ENCODE measurements at regions of chrX and their contacts with region 1.

Region 1: DNA sequence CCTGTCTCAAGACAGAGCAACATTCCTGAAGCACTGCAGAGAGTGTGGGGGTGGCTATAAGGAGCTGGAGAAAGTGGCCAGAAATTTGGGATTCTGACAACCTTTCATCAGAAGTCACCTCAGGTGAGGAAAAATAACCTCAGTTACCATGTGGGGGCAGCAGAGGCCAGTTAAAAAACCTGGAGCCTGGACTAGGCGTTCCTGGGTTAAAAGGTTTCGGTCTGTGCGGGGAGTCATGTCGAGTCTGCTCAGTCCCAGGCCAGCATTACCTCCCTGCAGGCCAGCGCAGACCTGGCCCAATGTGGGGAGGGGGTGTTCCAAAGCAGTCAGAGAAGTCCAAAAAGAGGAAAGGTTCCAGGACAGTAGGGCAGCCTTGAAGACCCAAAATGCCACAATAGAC is 10.9 kb upstream of the NALF2 start:
- DNase-seq: peak; percentile 18 to 44 (median 32)
- ATAC-seq: peak; percentile 83
- H3K4me3 ChIP-seq: no peak overlapping the region
- H3K27ac ChIP-seq: no peak overlapping the region
- H3K4me1 ChIP-seq: no peaks in the 10 kb centered on the region; a peak in 1 of 5 replicates
- H3K27me3 ChIP-seq: no peaks in the 10 kb centered on the region
- CTCF ChIP-seq: peak; percentile 38 to 59 (median 48); a peak in 5 of 6 replicates
- EP300 ChIP-seq: no peak
- POLR2A ChIP-seq: no peak
- RAD21 ChIP-seq: peak in 1 of 2 experiments; percentile 52; a peak in 3 of 4 replicates

Region 2: GRCh38 chrX:68832101-68832416 is 661.1 kb before region 1 on chrX:
- CTCF ChIA-PET with region 1: no interaction called
- POLR2A ChIA-PET with region 1: no interaction called
- in situ Hi-C with region 1: no loop called
- intact Hi-C with region 1: no loop called
- DNase-seq: no peak
- ATAC-seq: no peak
- H3K4me3 ChIP-seq: no peak overlapping the region
- H3K27ac ChIP-seq: no peak overlapping the region
- H3K4me1 ChIP-seq: peaks cover 0 to 22% of the 10 kb centered on the region in 2 experiments; a peak in 2 of 5 replicates
- H3K27me3 ChIP-seq: peaks cover 0 to 7% of the 10 kb centered on the region in 2 experiments; a peak in 1 of 5 replicates
- CTCF ChIP-seq: no peak
- EP300 ChIP-seq: no peak
- POLR2A ChIP-seq: no peak
- RAD21 ChIP-seq: no peak

Region 3: DNA sequence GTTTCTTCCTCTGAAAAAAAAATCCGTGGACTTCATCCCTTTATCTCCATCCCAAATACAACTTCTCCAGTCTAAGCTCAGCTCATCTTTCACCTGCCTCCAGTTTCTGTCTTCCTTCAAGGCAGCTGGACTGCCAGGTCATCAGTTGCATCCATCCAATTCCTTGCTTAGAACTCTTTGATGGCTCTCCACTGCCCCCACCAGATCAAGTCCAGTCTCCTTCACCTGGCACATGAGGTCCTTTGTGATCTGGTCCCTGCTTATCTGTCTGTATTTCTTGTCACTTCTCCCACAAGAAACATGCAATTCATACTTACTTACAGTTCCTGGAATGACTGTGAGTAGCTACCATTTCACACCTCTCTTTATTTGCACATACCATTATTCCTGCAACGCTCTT is 602.9 kb after region 1 on chrX:
- CTCF ChIA-PET with region 1: interaction called, 6 read pairs
- POLR2A ChIA-PET with region 1: no interaction called
- in situ Hi-C with region 1: loop called (anchors 10 kb)
- intact Hi-C with region 1: loop called (anchors 1 kb)
- DNase-seq: peak; percentile 11 to 21 (median 14)
- ATAC-seq: peak; percentile 72
- H3K4me3 ChIP-seq: no peak overlapping the region
- H3K27ac ChIP-seq: no peak overlapping the region
- H3K4me1 ChIP-seq: no peaks in the 10 kb centered on the region; a peak in 1 of 5 replicates
- H3K27me3 ChIP-seq: no peaks in the 10 kb centered on the region
- CTCF ChIP-seq: peak; percentile 28 to 30 (median 29); a peak in 3 of 6 replicates
- EP300 ChIP-seq: no peak
- POLR2A ChIP-seq: no peak
- RAD21 ChIP-seq: peak in 1 of 2 experiments; percentile 29; a peak in 1 of 4 replicates